Activated CD4-positive, alpha-beta memory T cell treated with anti-CD3 and anti-CD28 coated beads for 36 hours (primary cell): ENCODE measurements at regions of chr14 and their contacts with region 1.

Region 1: DNA sequence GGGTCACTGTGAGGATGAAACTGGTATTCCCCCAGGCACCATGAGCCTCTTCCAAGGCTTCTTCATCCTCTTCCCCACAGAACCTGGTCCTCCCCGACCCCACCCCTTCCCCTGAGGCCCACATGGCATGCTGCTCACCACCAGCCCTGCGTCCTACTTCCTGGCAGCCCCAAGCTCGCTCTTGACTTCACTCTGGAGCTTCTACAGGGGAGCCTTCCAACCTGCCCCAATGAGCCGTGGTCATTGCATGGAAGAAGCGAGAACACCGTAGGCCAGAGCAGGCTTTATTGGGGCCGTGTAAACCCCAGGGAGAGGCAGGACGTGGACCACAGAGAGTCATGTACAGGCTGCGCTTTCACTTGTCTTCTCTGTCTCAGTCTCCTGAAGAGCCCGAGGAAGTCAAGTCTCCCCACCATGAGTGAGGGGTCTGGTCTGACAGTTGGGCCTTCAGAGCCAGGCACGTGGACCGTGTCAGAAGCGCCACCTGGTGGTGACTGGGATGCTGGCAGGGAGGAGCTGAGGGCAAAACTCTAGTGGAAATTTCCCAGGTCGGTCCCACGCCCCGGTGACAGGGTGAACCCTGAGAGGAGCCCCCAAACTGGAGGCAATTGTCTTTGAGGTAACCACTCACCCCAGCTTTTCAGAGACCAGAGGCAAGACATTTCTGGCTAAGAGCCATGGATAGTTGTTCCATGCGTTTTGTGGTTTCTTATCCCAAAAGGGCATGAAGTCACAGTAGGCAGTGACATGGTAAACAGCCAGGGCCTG is 17.5 kb downstream of the RPS6KL1 start:
- DNase-seq: peak; percentile 83
- H3K4me3 Mint-ChIP-seq: no peak overlapping the region
- H3K27ac Mint-ChIP-seq: peak overlapping the region; percentile 8
- H3K4me1 Mint-ChIP-seq: no peaks in the 10 kb centered on the region
- H3K27me3 Mint-ChIP-seq: no peaks in the 10 kb centered on the region

Region 2: GRCh38 chr14:74720526-74720925 is 185.0 kb before region 1 on chr14:
- CTCF ChIA-PET with region 1: no interaction called
- POLR2A ChIA-PET with region 1: no interaction called
- intact Hi-C with region 1: no loop called
- DNase-seq: no peak
- H3K4me3 Mint-ChIP-seq: no peak overlapping the region
- H3K27ac Mint-ChIP-seq: no peak overlapping the region
- H3K4me1 Mint-ChIP-seq: peaks cover 1% of the 10 kb centered on the region
- H3K27me3 Mint-ChIP-seq: no peaks in the 10 kb centered on the region

Region 3: GRCh38 chr14:74852927-74853514 is 52.5 kb before region 1 on chr14:
- CTCF ChIA-PET with region 1: interaction called, 499 read pairs
- POLR2A ChIA-PET with region 1: no interaction called
- intact Hi-C with region 1: no loop called
- DNase-seq: no peak
- H3K4me3 Mint-ChIP-seq: no peak overlapping the region
- H3K27ac Mint-ChIP-seq: no peak overlapping the region
- H3K4me1 Mint-ChIP-seq: peaks cover 16% of the 10 kb centered on the region
- H3K27me3 Mint-ChIP-seq: no peaks in the 10 kb centered on the region

Region 4: DNA sequence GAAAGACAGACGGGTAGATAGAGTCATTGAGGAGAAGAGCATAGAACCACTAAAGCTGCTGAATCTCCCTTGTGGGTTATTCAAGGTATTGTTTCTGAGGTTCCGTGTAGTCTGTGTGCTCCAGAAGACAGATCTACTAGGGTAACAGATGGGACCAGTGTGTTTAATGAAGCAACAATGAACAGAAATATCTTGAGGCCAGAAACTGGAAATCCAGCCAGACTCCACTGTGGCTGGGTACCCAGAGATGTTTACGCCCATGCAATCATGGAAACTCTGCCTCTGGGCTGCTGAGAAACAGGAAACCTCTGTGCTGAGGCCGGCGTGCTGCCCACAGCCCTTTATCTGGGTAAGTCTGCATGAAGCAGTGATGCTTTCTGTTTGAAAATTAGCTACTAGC is 37.9 kb before region 1 on chr14:
- CTCF ChIA-PET with region 1: interaction called, 499 read pairs
- POLR2A ChIA-PET with region 1: no interaction called
- intact Hi-C with region 1: no loop called
- DNase-seq: peak; percentile 79
- H3K4me3 Mint-ChIP-seq: no peak overlapping the region
- H3K27ac Mint-ChIP-seq: peak overlapping the region; percentile 43
- H3K4me1 Mint-ChIP-seq: peaks cover 23% of the 10 kb centered on the region
- H3K27me3 Mint-ChIP-seq: no peaks in the 10 kb centered on the region

Region 5: DNA sequence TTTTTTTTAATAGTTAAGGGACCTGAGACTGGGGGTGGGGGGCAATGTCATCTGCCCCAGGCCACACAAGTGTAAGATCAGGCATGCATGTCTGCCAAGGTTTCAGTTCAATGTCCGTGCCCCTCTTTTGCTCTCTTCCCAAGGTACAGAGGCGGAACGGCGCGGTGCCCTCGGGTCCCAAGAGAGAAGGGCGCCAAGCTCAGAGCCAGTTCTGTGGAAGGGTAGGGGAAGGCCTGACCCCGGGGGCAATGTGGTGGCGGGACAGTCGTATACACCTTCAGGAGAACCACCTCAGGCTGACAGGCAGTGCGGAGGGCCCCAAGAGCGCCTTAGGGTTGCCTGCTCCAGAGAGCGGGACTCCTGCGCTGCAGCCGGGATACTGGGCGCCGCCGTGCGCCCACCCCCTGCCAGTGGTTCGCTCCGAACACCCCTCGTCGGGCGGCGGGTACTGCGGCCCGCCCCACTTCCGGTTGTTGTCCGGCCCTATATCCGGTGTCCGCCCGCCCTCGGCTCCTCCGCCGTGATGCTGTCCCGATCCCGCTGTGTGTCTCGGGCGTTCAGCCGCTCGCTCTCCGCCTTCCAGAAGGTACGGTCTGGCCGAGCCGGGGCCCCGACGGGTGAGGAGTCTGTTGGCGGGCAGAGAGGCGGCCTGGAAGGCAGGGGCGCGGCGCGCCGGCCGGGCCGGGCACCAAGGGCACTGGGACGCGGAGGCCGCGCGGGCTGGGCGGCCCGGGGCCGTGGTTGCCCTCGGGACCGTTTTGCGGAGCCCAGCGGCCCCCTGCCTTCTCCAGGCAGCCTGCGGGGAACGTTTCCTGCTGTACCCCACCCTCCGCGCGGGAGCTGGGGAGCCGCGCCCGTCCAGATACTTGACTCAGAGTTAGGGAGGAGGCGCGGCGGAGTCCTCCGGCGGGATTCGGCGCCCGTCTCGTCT is 23.9 kb before region 1 on chr14 and contains the start of gene DLST:
- CTCF ChIA-PET with region 1: interaction called, 99 read pairs
- POLR2A ChIA-PET with region 1: interaction called, 4 read pairs
- intact Hi-C with region 1: loop called (anchors 1 kb)
- DNase-seq: peak; percentile 91
- H3K4me3 Mint-ChIP-seq: peak within 1 kb of the TSS; percentile 99
- H3K27ac Mint-ChIP-seq: peak within 1 kb of the TSS; percentile 97
- H3K4me1 Mint-ChIP-seq: peaks cover 66% of the 10 kb centered on the region
- H3K27me3 Mint-ChIP-seq: no peaks in the 10 kb centered on the region
- total RNA-seq, gene DLST: 132 to 137 TPM

Region 6: DNA sequence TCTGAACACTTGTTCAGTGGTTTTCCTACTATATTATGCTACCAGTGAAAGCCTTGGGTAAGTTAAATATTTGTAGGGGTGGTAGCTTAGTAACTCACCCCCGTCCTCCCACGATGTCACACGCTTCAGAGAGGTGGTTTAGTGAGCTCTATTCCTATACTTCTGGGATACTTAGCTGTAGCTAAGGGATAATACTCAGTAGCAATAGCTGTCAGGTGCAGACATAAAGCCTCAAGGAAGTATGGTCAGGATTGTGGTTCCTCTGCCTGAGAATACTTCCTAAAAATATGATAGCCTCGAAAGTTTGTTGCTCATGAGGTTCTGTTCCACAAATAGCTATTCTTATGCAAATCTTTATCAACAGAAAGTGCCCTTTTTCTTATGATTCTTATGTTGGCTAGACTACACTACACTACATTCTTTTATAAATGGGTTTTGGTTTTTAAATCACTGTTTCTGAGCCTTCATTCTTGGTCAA is 11.9 kb before region 1 on chr14:
- CTCF ChIA-PET with region 1: interaction called, 80 read pairs
- POLR2A ChIA-PET with region 1: no interaction called
- intact Hi-C with region 1: no loop called
- DNase-seq: no peak
- H3K4me3 Mint-ChIP-seq: no peak overlapping the region
- H3K27ac Mint-ChIP-seq: no peak overlapping the region
- H3K4me1 Mint-ChIP-seq: no peaks in the 10 kb centered on the region
- H3K27me3 Mint-ChIP-seq: no peaks in the 10 kb centered on the region

Region 7: DNA sequence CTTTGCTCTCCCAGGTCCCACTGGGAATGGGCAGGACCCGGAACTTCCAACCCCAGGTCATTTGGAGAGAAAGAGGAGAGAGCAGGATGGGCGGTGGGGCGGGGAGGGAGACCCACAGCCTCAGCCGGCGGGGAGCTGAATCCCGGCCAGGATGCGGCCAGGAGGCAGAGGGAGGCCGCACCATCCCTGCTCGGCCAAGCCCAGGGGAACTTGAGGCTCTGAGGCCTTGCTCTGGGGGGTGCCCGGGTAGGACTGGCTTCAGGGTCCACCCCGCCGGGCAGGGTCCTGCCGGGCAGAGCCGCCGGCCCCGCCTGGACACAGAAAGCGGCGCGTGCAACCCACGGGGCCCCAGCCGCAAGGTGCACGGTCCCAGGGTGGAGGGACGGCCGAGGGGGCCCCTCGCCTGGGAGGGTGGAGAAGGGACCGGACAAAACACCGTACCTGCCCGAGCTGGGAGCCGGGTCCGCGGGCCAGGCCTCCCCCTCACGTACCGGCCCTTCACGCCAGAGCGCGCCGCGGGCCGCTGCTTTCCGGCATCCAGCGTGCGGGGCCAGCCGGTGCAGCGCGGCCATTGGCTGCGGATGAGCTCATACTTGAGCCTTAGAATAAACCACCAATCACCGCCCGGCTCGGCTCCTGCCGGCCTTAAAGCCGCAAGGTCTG is 17.3 kb after region 1 on chr14 and contains the start of gene RPS6KL1:
- CTCF ChIA-PET with region 1: interaction called, 15 read pairs
- POLR2A ChIA-PET with region 1: interaction called, 3 read pairs
- intact Hi-C with region 1: no loop called
- DNase-seq: peak; percentile 82
- H3K4me3 Mint-ChIP-seq: peak within 1 kb of the TSS; percentile 57
- H3K27ac Mint-ChIP-seq: no peak within 1 kb of the TSS
- H3K4me1 Mint-ChIP-seq: peaks cover 8% of the 10 kb centered on the region
- H3K27me3 Mint-ChIP-seq: peaks cover 7% of the 10 kb centered on the region
- total RNA-seq, gene RPS6KL1: 4.2 to 4.9 TPM

Region 8: GRCh38 chr14:74963705-74964271 is 58.2 kb after region 1 on chr14:
- CTCF ChIA-PET with region 1: no interaction called
- POLR2A ChIA-PET with region 1: no interaction called
- intact Hi-C with region 1: no loop called
- DNase-seq: no peak
- H3K4me3 Mint-ChIP-seq: no peak overlapping the region
- H3K27ac Mint-ChIP-seq: no peak overlapping the region
- H3K4me1 Mint-ChIP-seq: no peaks in the 10 kb centered on the region
- H3K27me3 Mint-ChIP-seq: no peaks in the 10 kb centered on the region

Region 9: GRCh38 chr14:74979442-74980361 is 74.1 kb after region 1 on chr14:
- CTCF ChIA-PET with region 1: no interaction called
- POLR2A ChIA-PET with region 1: no interaction called
- intact Hi-C with region 1: no loop called
- DNase-seq: no peak
- H3K4me3 Mint-ChIP-seq: no peak overlapping the region
- H3K27ac Mint-ChIP-seq: no peak overlapping the region
- H3K4me1 Mint-ChIP-seq: no peaks in the 10 kb centered on the region
- H3K27me3 Mint-ChIP-seq: no peaks in the 10 kb centered on the region

Region 10: GRCh38 chr14:75044322-75044721 is 138.8 kb after region 1 on chr14:
- CTCF ChIA-PET with region 1: no interaction called
- POLR2A ChIA-PET with region 1: no interaction called
- intact Hi-C with region 1: no loop called
- DNase-seq: no peak
- H3K4me3 Mint-ChIP-seq: no peak overlapping the region
- H3K27ac Mint-ChIP-seq: no peak overlapping the region
- H3K4me1 Mint-ChIP-seq: peaks cover 46% of the 10 kb centered on the region
- H3K27me3 Mint-ChIP-seq: no peaks in the 10 kb centered on the region